Activated naive CD4-positive, alpha-beta T cell treated with anti-CD3 and anti-CD28 coated beads, Interleukin-2, amount 10 ng/mL, durations not matched to agents 7 days and 5 days (primary cell): ENCODE measurements at regions of chr3 and their contacts with region 1.

Region 1: DNA sequence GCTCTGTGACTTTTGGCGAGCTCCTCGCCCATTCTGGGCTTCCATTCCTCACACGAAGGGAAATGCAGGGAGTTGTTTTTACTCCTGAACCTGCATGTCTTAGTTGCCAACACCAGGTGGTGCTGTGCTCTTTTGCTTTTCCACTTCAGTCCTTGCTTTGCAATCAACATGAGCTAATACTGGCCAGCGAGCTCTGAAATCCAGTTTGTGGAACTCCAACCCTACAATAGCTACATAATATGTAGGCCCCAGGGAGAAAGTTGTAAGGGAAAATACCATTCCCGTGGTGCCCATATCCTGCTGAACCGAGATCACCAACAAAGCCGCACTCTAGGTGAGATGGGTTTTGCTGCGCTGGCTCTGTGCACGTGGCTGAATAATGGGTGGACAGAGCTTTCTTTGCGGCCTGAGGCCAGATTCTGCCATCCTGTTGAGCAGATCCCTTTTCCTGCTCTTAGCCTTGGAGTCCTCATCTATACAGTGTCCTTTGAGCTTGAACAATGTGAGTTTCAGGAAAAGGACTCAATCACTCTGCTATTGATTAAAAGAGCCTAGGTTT is 25.0 kb downstream of the LSM3 start:
- DNase-seq: peak; percentile 61
- H3K4me3 Mint-ChIP-seq: no peak overlapping the region
- H3K27ac Mint-ChIP-seq: no peak overlapping the region
- H3K4me1 Mint-ChIP-seq: no peaks in the 10 kb centered on the region
- H3K27me3 Mint-ChIP-seq: no peaks in the 10 kb centered on the region

Region 2: GRCh38 chr3:13895155-13896105 is 308.2 kb before region 1 on chr3:
- CTCF ChIA-PET with region 1: interaction called, 25 read pairs
- DNase-seq: peak; percentile 98
- H3K4me3 Mint-ChIP-seq: peak overlapping the region; percentile 84
- H3K27ac Mint-ChIP-seq: peak overlapping the region; percentile 88
- H3K4me1 Mint-ChIP-seq: peaks cover 36% of the 10 kb centered on the region
- H3K27me3 Mint-ChIP-seq: peaks cover 33% of the 10 kb centered on the region

Region 3: GRCh38 chr3:14077310-14077709 is 126.3 kb before region 1 on chr3:
- CTCF ChIA-PET with region 1: no interaction called
- DNase-seq: no peak
- H3K4me3 Mint-ChIP-seq: no peak overlapping the region
- H3K27ac Mint-ChIP-seq: no peak overlapping the region
- H3K4me1 Mint-ChIP-seq: peaks cover 4% of the 10 kb centered on the region
- H3K27me3 Mint-ChIP-seq: peaks cover 5% of the 10 kb centered on the region

Region 4: GRCh38 chr3:14143271-14144225 is 60.1 kb before region 1 on chr3:
- CTCF ChIA-PET with region 1: no interaction called
- DNase-seq: peak; percentile 15
- H3K4me3 Mint-ChIP-seq: peak overlapping the region; percentile 13
- H3K27ac Mint-ChIP-seq: peak overlapping the region; percentile 95
- H3K4me1 Mint-ChIP-seq: peaks cover 48% of the 10 kb centered on the region
- H3K27me3 Mint-ChIP-seq: no peaks in the 10 kb centered on the region

Region 5: GRCh38 chr3:14166877-14167603 is 36.6 kb before region 1 on chr3:
- CTCF ChIA-PET with region 1: no interaction called
- DNase-seq: no peak
- H3K4me3 Mint-ChIP-seq: no peak overlapping the region
- H3K27ac Mint-ChIP-seq: no peak overlapping the region
- H3K4me1 Mint-ChIP-seq: peaks cover 6% of the 10 kb centered on the region
- H3K27me3 Mint-ChIP-seq: no peaks in the 10 kb centered on the region

Region 6: GRCh38 chr3:14222900-14223594 is 19.4 kb after region 1 on chr3:
- CTCF ChIA-PET with region 1: interaction called, 10 read pairs
- DNase-seq: no peak
- H3K4me3 Mint-ChIP-seq: no peak overlapping the region
- H3K27ac Mint-ChIP-seq: no peak overlapping the region
- H3K4me1 Mint-ChIP-seq: no peaks in the 10 kb centered on the region
- H3K27me3 Mint-ChIP-seq: peaks cover 26% of the 10 kb centered on the region

Region 7: DNA sequence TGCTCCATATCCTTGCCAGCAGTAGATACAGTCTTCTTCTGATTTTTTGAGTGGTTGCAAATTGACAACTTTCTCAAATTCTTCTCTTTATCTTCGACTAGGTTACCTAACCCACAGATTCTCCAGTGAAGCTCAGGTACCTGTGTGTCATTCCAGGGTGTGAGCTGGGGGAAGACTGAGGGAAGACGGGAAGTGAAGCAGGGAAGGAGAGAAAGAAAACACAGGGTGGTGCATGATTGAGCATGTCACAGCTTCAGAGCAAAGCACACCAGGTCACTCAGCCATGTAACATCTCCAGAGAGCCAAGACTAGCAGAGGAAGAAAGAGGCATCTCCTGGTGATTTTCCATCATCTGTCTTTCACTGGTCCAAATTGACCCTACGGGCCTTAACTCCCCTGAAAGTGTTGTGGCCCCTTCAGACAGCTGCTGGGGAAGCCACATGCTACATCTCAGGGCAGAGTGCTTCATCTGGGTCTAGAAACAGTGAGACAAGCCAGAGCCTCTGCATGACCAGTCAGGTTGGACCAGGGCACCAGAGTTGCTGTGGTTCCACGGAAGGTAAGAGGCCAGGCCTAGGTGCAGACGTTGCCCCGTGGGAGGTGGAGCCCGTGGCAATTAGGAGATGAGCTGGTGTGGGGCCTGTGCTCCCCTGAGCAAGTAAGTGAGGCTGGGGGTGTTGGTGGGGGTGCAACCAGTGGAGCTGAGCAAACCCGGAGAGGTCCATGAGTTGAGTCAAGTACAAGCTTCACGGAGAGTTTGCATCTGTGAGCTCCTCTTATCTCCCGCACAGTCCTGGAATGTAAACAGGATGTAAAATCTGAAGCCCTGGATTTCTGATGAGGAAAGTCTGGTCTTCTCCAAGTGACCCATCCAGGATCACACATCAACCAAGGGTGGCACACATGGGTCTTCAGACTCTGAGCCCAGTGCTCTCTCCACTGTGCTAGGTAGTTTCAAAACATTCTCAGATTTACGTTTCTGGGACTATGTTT is 42.5 kb after region 1 on chr3:
- CTCF ChIA-PET with region 1: interaction called, 10 read pairs
- DNase-seq: no peak
- H3K4me3 Mint-ChIP-seq: no peak overlapping the region
- H3K27ac Mint-ChIP-seq: no peak overlapping the region
- H3K4me1 Mint-ChIP-seq: no peaks in the 10 kb centered on the region
- H3K27me3 Mint-ChIP-seq: peaks cover 23% of the 10 kb centered on the region

Region 8: DNA sequence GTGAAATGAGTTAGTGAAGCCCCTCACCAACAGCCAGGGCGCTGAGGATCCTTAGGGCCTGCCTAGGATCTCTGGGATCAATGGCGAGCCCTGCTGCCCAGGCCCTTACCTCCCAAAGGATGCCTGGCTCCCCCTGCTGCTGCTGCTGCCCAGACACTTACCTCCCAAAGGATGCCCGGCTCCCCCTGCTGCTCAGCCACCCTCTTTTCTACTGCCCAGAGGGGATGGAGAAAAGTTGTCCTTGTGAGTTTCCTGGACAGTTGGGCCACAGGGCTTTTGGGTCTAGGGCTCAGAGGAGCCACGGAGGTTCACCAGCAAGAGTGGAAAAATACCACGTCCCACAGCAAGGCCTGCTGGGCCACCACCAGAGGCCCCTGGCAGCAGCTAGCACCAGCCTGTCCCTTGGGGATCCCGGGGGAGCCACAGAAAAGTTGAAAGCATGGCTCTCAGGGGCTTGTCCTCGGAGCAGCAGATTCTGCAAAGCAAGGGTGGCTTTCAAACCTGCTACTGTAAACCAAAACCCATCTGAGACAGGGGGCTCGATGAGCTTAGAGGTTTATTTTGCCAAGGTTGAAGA is 258.2 kb after region 1 on chr3:
- CTCF ChIA-PET with region 1: interaction called, 34 read pairs
- DNase-seq: peak; percentile 62
- H3K4me3 Mint-ChIP-seq: no peak overlapping the region
- H3K27ac Mint-ChIP-seq: peak overlapping the region; percentile 74
- H3K4me1 Mint-ChIP-seq: peaks cover 4% of the 10 kb centered on the region
- H3K27me3 Mint-ChIP-seq: no peaks in the 10 kb centered on the region

Region 9: GRCh38 chr3:14508961-14509795 is 305.6 kb after region 1 on chr3:
- CTCF ChIA-PET with region 1: interaction called, 11 read pairs
- DNase-seq: peak; percentile 82
- H3K4me3 Mint-ChIP-seq: no peak overlapping the region
- H3K27ac Mint-ChIP-seq: no peak overlapping the region
- H3K4me1 Mint-ChIP-seq: no peaks in the 10 kb centered on the region
- H3K27me3 Mint-ChIP-seq: peaks cover 16% of the 10 kb centered on the region